Left colon (tissue), 2 donors: ENCODE measurements at regions of chr21 and their contacts with region 1.

Region 1: DNA sequence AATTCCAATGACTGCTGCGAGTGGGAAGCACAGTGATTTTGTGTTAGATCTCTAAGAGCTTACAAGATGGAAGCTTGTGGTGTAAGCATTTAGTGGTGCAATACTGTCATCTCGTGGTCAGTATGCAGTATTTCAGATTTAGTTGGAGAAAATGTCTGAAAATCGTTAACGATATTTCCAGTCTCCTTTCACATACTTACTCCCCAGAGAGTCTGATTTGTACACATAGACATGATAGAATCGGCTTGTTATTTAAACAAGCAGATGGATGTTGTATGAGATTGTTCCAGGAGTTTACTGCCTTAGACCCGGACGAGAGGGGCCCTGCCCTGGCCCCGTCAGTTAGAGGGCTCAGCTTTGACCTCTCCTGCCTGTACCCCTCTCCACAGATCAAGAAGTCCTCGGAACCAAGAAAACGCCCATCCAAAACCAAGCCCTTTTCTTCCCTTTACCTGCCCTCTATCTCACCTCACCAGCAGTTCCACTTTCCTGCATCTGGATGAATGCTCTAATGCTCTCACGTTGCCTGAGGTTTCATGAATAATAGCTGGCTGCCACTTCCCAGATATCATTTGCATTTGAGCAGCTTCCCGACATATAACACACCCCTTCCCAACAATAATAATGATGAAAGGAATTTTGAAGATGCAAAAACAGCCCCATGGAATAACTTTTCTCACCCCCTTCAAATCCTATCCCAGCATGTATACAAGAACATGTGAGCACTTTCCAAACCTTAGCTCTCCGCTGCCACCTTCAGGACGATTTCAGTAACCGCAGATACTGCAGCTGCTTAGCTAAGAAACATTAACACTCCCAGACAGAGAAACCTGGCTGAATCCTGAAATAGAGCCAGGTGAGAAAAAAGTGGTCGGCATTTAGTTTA is 247.3 kb downstream of the LTN1 start:
- DNase-seq: peak; percentile 61 to 66
- ATAC-seq: peak; percentile 94

Region 2: GRCh38 chr21:27700974-27701614 is 1044.3 kb before region 1 on chr21:
- intact Hi-C with region 1: loop called in 1 of 2 experiments (anchors 10 kb)
- DNase-seq: peak; percentile 72 to 89
- ATAC-seq: peak; percentile 84

Region 3: DNA sequence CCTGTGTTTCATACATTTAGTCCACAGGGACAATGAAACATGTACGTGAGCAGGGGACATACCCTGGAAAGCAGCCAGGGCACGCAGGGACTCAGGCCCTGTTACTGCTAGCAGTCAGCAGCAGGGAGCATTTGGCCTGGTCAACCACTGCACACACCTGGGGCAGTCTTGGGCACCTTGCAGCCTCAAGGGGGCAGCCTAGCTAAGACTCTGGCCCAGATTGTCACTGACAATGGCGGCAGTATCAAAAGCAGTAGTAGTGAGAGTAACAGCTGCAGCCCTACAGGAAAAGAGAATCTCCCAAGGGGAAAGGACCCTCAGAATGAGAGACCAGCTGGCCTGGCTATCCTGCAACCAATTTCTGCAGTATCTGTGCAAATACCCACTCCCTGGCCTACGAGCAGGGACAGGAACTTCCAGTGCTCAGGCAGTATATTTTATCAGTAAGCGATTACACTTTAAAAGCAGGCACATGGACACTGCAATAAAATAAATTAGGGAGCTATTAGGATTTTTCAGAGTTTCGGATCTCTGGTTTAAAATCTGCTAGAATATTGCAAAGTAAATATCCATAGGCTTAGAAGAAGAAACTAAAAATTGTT is 228.3 kb before region 1 on chr21:
- intact Hi-C with region 1: loop called in 1 of 2 experiments (anchors 10 kb)
- DNase-seq: peak; percentile 43 to 76
- ATAC-seq: peak; percentile 96

Region 4: GRCh38 chr21:28943631-28944030 is 198.3 kb after region 1 on chr21:
- intact Hi-C with region 1: no loop called
- DNase-seq: no peak
- ATAC-seq: no peak